ENCODE measurements at regions of chr2 and their contacts with region 1.

Region 1: DNA sequence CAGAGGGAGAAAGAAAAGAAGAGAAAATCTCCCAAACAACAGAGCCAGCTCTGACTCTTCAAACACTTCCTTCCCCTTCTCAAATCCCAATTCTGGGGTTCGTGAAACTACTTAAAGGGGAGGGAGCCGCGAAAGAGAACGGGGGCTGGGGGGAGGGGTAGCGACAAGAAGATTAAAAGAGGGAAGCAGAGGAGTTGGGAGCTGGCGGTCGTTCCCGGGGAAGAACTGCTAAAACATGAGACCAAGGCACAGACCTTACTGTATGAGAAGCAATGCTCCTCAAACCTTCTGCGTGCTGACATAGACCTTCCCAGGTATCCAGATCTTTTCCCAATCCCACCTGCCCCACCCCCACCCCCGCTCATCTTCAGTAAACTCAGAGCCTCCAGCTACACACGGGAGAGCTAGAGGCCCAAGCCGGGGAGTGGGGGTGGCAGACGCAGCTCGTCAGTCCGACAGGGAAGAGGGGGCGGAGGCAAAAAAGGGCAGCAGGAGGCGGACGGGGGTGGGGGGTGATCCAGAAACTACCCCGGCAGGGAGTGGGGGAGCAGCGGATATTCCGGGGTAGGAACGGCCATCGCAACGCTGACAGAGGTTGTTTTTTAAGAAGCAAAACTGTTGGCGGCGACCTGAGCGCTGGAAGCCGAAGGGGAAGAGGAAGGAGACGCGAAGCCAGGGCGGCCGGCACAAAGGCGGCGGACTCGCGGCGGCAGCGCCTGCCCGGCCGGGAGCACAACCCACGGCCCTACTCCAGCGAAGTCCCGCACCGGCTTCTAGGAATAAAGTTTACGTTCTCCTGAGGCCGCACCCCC is 1.0 kb downstream of the BAZ2B start:
- DNase-seq: peak; percentile 93 to 94 (median 94)
- ATAC-seq: peak; percentile 89 to 98 (median 97)
- H3K4me3 ChIP-seq: peak overlapping the region; percentile 61 to 94 (median 74)
- H3K27ac ChIP-seq: peak overlapping the region; percentile 94 to 99 (median 98)
- H3K4me1 ChIP-seq: peaks cover 3 to 52% (median 32%) of the 10 kb centered on the region in 12 donors
- H3K27me3 ChIP-seq: no peaks in the 10 kb centered on the region
- CTCF ChIP-seq: no peak
- POLR2A ChIP-seq: peak in 1 of 2 donors; percentile 62

Region 2: DNA sequence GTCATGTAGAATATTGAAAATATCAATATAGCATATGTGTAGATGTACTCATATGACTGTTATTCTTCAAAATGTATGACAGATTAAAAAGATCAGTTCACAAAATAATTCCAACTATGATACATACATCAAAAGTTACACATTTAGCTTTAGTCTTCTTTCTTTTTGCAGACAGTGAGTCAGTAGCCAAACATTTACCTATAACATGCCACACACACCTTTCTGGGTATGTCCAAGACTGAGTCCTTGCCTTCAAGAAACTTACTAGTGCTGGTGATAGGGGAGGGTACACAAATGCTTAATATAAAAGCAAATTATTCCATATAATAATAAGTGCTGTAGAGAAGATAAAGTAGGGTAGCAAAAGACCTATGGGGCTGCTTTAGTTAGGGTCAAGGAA is 175.9 kb before region 1 on chr2:
- intact Hi-C with region 1: loop called in 2 of 10 experiments (anchors 10 kb)
- DNase-seq: no peak
- ATAC-seq: no peak
- H3K4me3 ChIP-seq: no peak overlapping the region
- H3K27ac ChIP-seq: no peak overlapping the region
- H3K4me1 ChIP-seq: peaks cover 0 to 13% (median 0%) of the 10 kb centered on the region in 12 donors
- H3K27me3 ChIP-seq: no peaks in the 10 kb centered on the region
- CTCF ChIP-seq: no peak
- POLR2A ChIP-seq: no peak

Region 3: GRCh38 chr2:159445307-159445706 is 170.0 kb before region 1 on chr2:
- intact Hi-C with region 1: loop called in 1 of 10 experiments (anchors 10 kb)
- DNase-seq: no peak
- ATAC-seq: no peak
- H3K4me3 ChIP-seq: no peak overlapping the region
- H3K27ac ChIP-seq: no peak overlapping the region
- H3K4me1 ChIP-seq: peaks cover 0 to 14% (median 3%) of the 10 kb centered on the region in 12 donors
- H3K27me3 ChIP-seq: no peaks in the 10 kb centered on the region
- CTCF ChIP-seq: no peak
- POLR2A ChIP-seq: no peak

Region 4: GRCh38 chr2:159516241-159516766 is 99.0 kb before region 1 on chr2:
- intact Hi-C with region 1: loop called in 4 of 10 experiments (anchors 5 to 10 kb)
- DNase-seq: no peak
- ATAC-seq: peak; percentile 40 to 77 (median 70)
- H3K4me3 ChIP-seq: peak overlapping the region in 11 of 12 donors; percentile 23 to 60 (median 52)
- H3K27ac ChIP-seq: peak overlapping the region in 11 of 12 donors; percentile 7 to 79 (median 59)
- H3K4me1 ChIP-seq: peaks cover 0 to 62% (median 29%) of the 10 kb centered on the region in 12 donors
- H3K27me3 ChIP-seq: no peaks in the 10 kb centered on the region
- CTCF ChIP-seq: no peak
- POLR2A ChIP-seq: no peak

Region 5: GRCh38 chr2:159650574-159650973 is 35.2 kb after region 1 on chr2:
- intact Hi-C with region 1: no loop called
- DNase-seq: no peak
- ATAC-seq: no peak
- H3K4me3 ChIP-seq: no peak overlapping the region
- H3K27ac ChIP-seq: no peak overlapping the region
- H3K4me1 ChIP-seq: peaks cover 0 to 4% (median 0%) of the 10 kb centered on the region in 12 donors
- H3K27me3 ChIP-seq: no peaks in the 10 kb centered on the region
- CTCF ChIP-seq: no peak
- POLR2A ChIP-seq: no peak

Region 6: GRCh38 chr2:159797543-159798375 is 182.4 kb after region 1 on chr2 and contains the start of gene CD302:
- intact Hi-C with region 1: loop called in 2 of 10 experiments (anchors 10 kb)
- DNase-seq: peak; percentile 82 to 90 (median 86)
- ATAC-seq: peak; percentile 49 to 92 (median 86)
- H3K4me3 ChIP-seq: peak within 1 kb of the TSS; percentile 62 to 96 (median 80)
- H3K27ac ChIP-seq: peak within 1 kb of the TSS; percentile 58 to 94 (median 77)
- H3K4me1 ChIP-seq: peaks cover 0 to 61% (median 13%) of the 10 kb centered on the region in 12 donors
- H3K27me3 ChIP-seq: no peaks in the 10 kb centered on the region
- CTCF ChIP-seq: no peak
- POLR2A ChIP-seq: peak in 1 of 2 donors; percentile 57
- total RNA-seq, gene CD302: 9.0 to 24.9 (median 13.7) TPM